Posterior cingulate gyrus (tissue), 11 donors: ENCODE measurements at regions of chr11 and their contacts with region 1.

Region 1: DNA sequence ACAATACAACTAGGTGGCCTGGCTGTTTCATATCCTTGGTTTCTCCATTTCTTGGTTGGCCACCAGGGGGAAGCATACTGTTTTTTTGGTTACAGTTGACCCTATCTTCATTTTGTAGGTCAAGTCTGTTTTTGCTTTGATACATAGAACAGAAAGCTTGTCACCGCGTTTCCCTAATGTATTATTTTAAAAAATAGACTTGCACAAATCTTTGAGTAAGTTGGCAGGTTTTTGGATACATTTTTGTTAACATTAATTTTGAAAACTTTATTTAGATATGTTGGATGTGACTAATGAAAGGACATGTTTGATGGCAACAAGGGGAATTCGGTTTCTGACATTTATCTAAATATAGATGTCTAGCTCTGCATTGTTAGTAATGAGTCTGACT is 3.0 kb downstream of the NCR3LG1 start:
- DNase-seq: peak in 5 of 10 donors; percentile 15 to 58 (median 38)

Region 2: DNA sequence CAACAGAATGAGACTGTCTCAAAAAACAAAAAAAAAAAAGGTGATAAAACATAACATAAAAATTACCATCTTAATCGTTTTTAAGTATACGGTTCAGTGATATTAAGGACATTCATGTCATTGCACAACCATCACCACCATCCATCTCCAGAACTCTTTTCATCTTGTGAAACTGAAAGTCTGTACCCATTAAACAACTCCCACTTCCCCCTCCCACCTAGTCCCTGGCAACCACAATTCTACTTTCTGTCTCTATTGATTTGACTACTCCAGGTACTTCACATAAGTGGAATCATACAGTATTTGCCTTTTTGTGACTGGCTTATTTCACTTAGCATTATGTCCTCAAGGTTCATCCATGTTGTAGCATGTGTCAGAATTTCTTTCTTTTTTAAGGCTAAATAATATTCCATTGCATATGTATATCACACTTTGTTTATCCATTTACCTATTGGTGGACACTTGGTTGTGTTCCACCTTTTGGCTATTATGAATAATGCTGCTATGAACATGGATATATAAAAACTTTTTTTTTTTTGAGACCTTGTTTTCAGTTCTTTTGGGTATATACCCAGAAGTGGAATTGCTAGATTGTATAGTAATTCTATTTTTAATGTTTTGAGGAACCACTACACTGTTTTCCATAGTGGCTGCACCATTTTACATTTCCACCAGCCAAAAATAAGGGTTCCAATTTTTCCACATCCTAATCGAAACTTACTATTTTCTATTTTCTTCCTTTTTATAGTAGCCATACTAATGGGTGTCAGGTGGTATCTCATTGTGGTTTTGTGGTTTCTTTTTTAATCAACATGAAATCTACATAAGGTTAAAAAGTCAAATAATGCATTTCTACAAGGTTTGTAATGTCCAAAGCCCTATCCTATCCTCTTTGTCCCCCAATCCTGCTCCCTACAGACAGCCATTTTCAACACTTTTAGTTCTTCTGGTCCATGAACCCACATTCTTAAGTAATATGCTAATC is 123.4 kb before region 1 on chr11:
- intact Hi-C with region 1: loop called (anchors 10 kb)
- DNase-seq: no peak